Dendritic cell treated with granulocyte-macrophage colony-stimulating factor and Interleukin-4, amounts not matched to agents 40 ng/mL and 50 ng/mL, for 4 days (primary cell): ENCODE measurements at regions of chr7 and their contacts with region 1.

Region 1: DNA sequence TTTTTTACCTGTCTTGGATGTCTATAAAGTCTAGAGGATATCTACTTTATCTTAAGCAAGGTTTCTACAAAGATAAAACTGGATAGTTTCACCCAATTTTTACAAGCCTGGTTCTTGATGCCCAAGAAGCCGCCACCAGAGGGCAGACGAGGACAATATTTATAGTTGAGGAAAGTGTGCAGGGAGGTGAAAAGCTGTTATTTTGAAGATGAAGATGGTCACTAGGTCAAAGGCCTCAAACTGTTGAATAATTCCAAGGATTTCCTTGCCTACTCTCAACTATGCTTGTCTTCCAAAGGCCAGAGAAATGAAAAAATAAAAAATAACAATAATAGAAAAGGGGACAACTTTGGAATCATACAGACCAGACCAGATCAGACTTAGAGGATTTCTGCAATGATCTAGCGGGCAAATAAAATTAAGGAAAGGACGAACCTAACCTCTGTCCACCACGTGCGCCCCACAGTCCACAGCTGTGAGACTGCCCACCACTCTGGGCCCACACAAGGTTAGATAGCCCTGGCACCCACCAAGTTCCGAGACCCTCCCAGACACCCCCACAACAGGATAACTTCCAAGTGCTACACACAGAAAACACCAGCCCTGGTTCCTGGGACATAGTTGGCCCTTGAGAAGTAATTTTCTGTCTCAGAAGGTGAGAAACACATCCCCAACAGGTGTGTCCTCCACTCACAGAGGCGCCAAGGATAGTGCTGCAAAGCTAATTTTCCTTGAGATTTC is 2.8 kb downstream of the PKD1L1 start:
- H3K4me3 Mint-ChIP-seq: no peak overlapping the region
- H3K27ac Mint-ChIP-seq: no peak overlapping the region
- H3K4me1 Mint-ChIP-seq: peaks cover 26% of the 10 kb centered on the region
- H3K27me3 Mint-ChIP-seq: peaks cover 4% of the 10 kb centered on the region

Region 2: DNA sequence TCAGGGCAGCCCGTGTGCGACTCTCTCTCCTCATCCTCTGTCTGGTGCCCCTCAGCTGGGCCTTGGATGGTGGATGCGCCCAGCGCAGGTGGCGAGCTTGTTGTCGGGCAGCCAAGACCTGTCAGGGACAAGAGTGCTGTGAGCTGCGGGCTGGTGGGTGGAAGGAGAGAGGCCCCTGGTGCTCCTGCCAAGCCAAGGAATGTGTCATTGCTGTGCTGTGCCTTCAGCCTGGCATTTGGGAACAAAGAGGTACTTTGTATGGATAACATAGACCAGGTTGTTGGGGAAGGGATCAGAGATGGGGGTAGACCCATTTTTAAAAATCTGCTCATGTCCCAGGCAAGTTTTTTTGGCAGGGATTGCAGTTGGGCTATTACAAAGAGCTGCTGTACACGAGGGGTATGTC is 118.1 kb before region 1 on chr7:
- intact Hi-C with region 1: no loop called
- H3K4me3 Mint-ChIP-seq: no peak overlapping the region
- H3K27ac Mint-ChIP-seq: no peak overlapping the region
- H3K4me1 Mint-ChIP-seq: peaks cover 5% of the 10 kb centered on the region
- H3K27me3 Mint-ChIP-seq: peaks cover 9% of the 10 kb centered on the region

Region 3: GRCh38 chr7:47968847-47969774 is 23.7 kb after region 1 on chr7:
- intact Hi-C with region 1: loop called (anchors 2 kb)
- H3K4me3 Mint-ChIP-seq: peak overlapping the region; percentile 56
- H3K27ac Mint-ChIP-seq: peak overlapping the region; percentile 88
- H3K4me1 Mint-ChIP-seq: peaks cover 30% of the 10 kb centered on the region
- H3K27me3 Mint-ChIP-seq: no peaks in the 10 kb centered on the region

Region 4: DNA sequence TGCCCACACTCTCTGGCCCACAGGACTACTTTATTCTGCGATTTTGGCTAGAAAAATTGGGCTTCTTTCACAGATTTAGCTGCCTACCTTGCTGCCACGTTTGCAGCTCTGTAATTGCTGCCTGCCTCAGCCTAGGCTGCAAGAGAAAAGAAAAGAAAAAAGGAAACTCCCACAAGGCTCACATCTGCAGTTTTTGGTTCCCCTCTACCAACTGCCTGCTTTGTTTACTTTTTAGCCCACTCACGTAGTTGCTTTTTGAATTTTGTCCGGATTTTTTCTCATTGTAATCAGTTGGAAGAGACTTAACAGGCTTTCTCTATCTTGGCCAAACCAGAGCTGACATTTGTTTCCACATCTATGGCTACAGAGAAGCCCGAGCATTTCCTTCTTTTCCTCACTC is 59.2 kb after region 1 on chr7:
- intact Hi-C with region 1: loop called (anchors 10 kb)
- H3K4me3 Mint-ChIP-seq: peak overlapping the region; percentile 46
- H3K27ac Mint-ChIP-seq: peak overlapping the region; percentile 48
- H3K4me1 Mint-ChIP-seq: peaks cover 21% of the 10 kb centered on the region
- H3K27me3 Mint-ChIP-seq: no peaks in the 10 kb centered on the region

Region 5: DNA sequence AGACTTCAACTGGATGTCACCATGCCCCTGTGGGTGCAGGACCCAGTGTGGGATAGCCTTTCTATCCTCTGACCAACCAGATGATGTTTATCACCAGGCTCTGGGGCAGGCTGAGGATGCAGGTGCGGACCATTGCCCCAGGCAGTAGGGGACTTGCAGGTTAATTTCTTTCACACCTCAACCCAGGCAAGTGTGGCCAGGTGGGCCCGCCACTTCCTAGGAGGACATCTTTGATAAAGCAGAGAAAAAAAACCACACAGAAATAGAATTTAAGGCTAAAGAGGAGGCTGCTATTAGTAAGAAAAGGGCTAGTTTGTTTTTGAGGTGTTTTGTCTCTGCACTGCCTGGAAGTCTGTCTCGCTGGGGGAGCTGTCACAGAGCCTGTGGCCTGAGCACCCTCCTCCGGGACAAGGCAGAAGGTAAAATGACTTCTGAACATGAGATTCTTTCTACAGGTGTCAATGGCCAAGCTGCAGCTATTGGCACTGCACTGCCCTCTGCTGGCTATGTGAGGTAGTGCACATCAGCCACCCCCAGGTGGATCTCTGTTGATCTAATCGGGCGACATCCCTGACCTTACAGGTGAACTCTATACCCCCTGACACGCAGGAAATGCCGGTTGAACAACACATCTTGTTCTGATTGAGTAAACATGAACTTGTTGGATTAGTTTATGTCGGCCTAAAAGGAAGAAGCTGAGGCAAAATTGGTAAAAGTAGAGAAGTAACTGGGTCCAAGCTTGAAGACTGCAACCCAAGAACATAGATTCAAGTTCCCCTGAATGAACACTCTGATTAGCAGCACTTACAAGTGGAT is 164.6 kb after region 1 on chr7:
- intact Hi-C with region 1: loop called (anchors 1 kb)
- H3K4me3 Mint-ChIP-seq: no peak overlapping the region
- H3K27ac Mint-ChIP-seq: no peak overlapping the region
- H3K4me1 Mint-ChIP-seq: peaks cover 29% of the 10 kb centered on the region
- H3K27me3 Mint-ChIP-seq: peaks cover 6% of the 10 kb centered on the region

Region 6: DNA sequence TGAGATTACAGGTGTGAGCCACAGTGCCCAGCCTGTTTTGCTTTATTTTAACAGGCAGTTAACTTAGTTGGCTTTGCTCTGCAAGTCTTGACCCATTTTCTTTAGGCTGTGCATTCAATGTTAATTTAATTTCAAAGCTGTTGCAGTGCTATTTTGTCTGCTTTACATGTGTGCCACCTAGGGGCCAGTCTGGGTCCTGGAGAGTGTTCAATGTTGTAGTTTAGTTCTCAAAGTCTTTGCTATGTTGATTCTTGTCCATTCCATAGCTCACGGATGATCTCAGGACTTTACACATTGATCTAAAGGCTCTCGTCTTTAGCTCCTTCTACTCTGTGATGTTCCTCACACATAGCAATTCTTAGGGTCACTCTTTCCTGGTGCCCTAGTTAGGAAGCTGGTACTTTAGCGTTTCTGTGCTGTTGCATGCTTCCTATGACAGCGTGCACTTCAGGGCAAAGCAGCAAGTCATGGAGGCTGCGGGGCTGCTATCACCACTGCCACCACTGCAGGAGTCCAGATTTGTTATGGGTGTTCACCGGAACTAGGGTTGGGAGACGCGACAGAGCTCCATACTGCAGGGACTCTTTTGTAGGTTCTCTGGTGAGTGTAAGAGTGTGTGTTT is 209.5 kb after region 1 on chr7:
- intact Hi-C with region 1: loop called (anchors 1 kb)
- H3K4me3 Mint-ChIP-seq: no peak overlapping the region
- H3K27ac Mint-ChIP-seq: no peak overlapping the region
- H3K4me1 Mint-ChIP-seq: no peaks in the 10 kb centered on the region
- H3K27me3 Mint-ChIP-seq: peaks cover 9% of the 10 kb centered on the region

Region 7: GRCh38 chr7:48209004-48209600 is 263.7 kb after region 1 on chr7:
- intact Hi-C with region 1: no loop called
- H3K4me3 Mint-ChIP-seq: no peak overlapping the region
- H3K27ac Mint-ChIP-seq: no peak overlapping the region
- H3K4me1 Mint-ChIP-seq: peaks cover 7% of the 10 kb centered on the region
- H3K27me3 Mint-ChIP-seq: no peaks in the 10 kb centered on the region

Region 8: GRCh38 chr7:48528646-48529045 is 583.2 kb after region 1 on chr7:
- intact Hi-C with region 1: no loop called
- H3K4me3 Mint-ChIP-seq: no peak overlapping the region
- H3K27ac Mint-ChIP-seq: no peak overlapping the region
- H3K4me1 Mint-ChIP-seq: no peaks in the 10 kb centered on the region
- H3K27me3 Mint-ChIP-seq: no peaks in the 10 kb centered on the region

Region 9: DNA sequence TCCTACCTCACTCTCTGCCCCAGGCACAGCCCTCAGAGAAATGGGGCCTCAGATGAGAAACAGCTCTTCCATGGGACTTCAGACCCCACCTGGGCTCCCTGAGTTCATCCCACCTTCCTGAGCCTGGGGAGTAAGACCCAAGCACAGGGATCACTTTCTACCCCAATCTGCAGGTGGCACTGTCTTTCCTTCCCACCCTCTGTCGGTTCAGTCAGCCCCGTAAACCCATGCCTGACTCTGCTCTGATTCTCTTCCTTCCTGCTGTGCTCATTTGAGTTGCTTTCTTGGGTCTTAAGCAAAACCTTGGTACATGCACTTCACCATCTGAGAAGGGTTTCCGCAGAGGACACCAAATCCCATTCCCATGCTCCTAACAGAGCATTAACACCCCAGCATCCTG is 672.6 kb after region 1 on chr7:
- intact Hi-C with region 1: no loop called
- H3K4me3 Mint-ChIP-seq: no peak overlapping the region
- H3K27ac Mint-ChIP-seq: no peak overlapping the region
- H3K4me1 Mint-ChIP-seq: peaks cover 5% of the 10 kb centered on the region
- H3K27me3 Mint-ChIP-seq: no peaks in the 10 kb centered on the region